Right lobe of liver (tissue), 6 donors: ENCODE measurements at regions of chr17 and their contacts with region 1.

Region 1: GRCh38 chr17:49779739-49780231 is 8.7 kb upstream of the KAT7 start:
- DNase-seq: no peak
- ATAC-seq: peak; percentile 81 to 91 (median 86)
- H3K4me3 ChIP-seq: no peak overlapping the region
- H3K27ac ChIP-seq: no peak overlapping the region
- H3K4me1 ChIP-seq: peaks cover 0 to 6% (median 0%) of the 10 kb centered on the region in 4 donors
- H3K27me3 ChIP-seq: no peaks in the 10 kb centered on the region
- CTCF ChIP-seq: peak; percentile 63 to 69 (median 66)
- POLR2A ChIP-seq: no peak

Region 2: DNA sequence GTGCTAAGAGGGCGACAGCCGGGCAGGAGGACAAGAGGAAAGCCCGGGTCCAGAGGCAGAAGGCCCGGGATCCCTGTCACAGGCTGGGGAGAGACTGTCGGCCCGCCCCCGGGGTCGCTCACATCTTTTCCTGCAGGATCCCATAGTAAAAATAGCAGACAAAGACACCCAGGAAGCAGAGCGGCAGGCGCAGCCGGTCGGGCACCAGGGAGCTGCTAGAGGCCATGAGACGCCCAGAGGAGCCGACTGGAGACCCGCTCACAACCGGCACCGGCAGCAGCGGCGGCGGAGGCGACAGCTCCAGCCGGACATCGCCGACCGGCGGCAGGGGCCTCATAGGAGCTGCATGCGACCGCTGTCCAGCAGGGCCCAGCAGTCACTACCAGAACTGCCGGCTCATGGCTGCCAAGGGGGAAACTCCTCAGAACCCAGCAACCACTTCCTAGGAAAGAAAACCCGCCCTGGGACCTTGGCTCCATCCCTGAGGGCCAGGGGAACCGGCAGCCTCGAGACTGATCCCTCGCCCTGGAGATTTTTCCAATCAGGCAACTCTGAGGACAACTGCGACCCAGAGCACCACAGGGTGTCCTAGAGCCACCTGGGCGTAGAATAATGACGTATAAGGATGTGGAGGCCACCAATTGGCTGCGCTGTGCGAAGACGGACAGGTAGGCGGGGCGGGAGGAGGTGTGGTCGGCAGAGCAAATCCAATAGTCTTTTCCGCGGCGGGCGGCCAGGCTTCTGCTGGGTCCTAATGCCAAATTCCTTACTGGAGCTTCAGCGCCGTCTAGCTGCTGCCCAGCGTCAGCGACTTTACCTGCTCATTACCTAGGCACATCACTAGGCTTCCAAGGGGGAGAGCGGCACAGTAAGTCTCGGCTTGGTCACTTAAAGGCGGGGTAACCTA is 71.9 kb before region 1 on chr17 and contains the start of gene SLC35B1:
- intact Hi-C with region 1: loop called (anchors 5 to 10 kb)
- DNase-seq: peak; percentile 99 to 100 (median 99)
- ATAC-seq: peak; percentile 94 to 97 (median 94)
- H3K4me3 ChIP-seq: peak within 1 kb of the TSS; percentile 92 to 99 (median 92)
- H3K27ac ChIP-seq: peak within 1 kb of the TSS; percentile 97 to 100 (median 99)
- H3K4me1 ChIP-seq: peaks cover 0 to 30% (median 3%) of the 10 kb centered on the region in 4 donors
- H3K27me3 ChIP-seq: no peaks in the 10 kb centered on the region
- CTCF ChIP-seq: peak; percentile 61 to 76 (median 69)
- POLR2A ChIP-seq: peak; percentile 85
- total RNA-seq, gene SLC35B1: 31.7 to 80.0 (median 56.9) TPM

Region 3: DNA sequence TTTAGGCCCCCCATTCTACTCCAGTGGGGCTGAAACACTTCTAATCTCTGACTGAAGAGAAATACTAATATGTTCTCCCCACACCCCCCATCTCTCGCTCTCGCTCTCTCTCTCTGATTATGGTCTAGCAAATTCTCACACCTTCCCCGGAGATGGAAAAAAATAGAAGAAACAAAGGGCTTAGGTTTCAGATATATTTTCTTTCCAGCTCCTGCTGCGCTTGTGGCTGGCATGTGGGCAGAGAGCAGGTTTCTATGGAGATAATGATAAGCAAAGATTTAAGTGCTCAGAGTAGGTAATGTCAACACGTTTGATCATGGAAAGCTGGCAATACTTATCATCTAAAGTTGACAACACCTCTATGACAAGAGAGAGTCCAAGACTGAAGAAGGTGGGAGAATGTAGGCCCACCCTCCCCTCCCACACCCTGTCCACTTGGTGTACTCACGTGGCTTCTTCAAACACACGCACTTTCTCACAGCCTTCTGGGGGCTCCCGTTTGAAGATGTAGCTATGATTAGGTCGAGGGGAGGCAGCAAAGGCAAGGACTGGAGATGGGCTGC is 64.0 kb before region 1 on chr17:
- intact Hi-C with region 1: loop called in 1 of 2 experiments (anchors 10 kb)
- DNase-seq: no peak
- ATAC-seq: no peak
- H3K4me3 ChIP-seq: no peak overlapping the region
- H3K27ac ChIP-seq: no peak overlapping the region
- H3K4me1 ChIP-seq: no peaks in the 10 kb centered on the region
- H3K27me3 ChIP-seq: no peaks in the 10 kb centered on the region
- CTCF ChIP-seq: no peak
- POLR2A ChIP-seq: no peak